Naive thymus-derived CD4-positive, alpha-beta T cell (primary cell): ENCODE measurements at regions of chr2 and their contacts with region 1.

Region 1: DNA sequence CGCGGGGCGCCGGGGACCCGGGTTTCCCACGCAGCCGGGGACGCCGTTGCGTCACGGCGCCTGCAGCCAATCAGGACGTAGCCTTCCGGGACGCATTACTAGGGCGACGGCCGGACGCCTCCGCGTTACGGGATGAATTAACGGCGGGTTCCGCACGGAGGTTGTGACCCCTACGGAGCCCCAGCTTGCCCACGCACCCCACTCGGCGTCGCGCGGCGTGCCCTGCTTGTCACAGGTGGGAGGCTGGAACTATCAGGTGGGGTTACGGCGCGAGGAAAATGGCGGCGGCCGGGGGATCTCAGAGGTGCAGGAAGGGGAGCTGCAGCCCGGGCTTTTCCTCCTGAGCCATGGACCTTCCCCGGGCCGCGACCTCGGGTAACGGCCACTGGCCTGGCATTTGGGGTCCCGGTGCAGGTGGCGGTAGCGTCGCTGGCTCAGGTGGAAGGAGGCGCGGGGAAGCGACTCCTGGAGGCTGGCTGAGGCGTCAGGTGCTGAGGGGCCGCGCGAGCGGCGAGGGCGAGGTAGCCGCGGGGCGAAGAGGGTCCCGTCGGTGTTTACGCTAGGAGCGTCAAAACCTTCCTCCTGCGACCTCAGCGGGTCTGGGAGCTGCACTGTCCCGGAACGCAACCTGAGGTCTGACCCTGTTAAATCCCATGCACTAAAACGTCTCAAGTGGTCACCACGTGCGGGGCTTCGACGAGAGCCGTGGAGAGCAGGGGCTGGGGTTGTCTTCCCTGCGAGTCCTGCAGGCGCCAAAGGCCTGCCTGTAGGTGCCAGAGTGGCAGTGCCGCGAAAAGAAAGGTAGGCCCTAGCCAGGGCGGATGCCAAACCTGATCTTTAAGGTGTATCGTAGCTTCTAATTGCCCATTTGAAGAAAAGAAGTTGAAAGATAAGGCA is at the start of gene LCLAT1:
- DNase-seq: peak; percentile 72 to 91 (median 86)
- ATAC-seq: peak; percentile 89
- H3K4me3 ChIP-seq: peak within 1 kb of the TSS; percentile 89
- H3K4me3 Mint-ChIP-seq: peak within 1 kb of the TSS; percentile 86 to 97 (median 95)
- H3K27ac ChIP-seq: peak within 1 kb of the TSS; percentile 91
- H3K27ac Mint-ChIP-seq: peak within 1 kb of the TSS; percentile 92 to 99 (median 97)
- H3K4me1 ChIP-seq: peaks cover 10 to 18% of the 10 kb centered on the region in 2 donors
- H3K4me1 Mint-ChIP-seq: peaks cover 23 to 56% (median 48%) of the 10 kb centered on the region in 7 donors
- H3K27me3 ChIP-seq: no peaks in the 10 kb centered on the region
- H3K27me3 Mint-ChIP-seq: no peaks in the 10 kb centered on the region
- total RNA-seq, gene LCLAT1: 18.2 to 25.2 (median 22.2) TPM

Region 2: DNA sequence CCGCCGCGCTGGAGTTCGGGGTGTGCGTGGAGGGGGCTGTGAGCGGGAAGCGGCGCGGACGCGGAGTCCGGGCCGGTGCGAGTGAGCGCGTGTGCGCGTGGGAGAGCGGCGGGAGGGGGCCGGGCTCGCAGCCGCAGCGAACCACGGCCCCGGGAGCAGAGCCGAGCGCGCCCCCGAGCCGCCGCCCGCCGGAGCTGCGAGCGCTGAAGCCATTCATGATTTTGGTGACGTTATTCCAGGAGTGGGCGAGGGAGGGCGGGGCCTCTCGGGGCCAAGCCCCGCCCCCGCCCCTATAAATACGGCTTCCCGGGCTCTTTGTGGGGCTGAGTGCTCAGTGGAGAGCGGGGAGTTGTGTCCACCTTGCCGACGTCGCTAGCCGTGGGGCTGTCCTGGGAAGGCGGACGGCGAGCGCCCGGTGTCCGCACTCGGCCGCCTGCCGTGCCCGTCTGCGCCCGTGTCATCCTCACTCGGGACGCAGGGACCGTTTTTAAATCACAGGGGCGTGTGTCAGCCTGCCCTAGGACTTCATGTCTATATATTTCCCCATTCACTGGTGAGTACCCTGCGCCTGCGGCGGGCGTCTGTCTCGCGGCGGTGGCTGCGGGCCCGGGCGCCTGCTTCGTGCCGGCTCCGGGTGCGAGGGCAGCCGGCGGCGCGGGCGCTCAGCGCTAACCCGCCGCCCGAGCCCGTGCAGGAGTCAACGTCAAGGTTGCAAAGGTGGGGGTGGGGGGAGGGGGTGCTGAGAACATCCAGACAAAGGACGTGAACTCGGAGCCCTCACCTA is 216.0 kb before region 1 on chr2 and contains the start of gene LBH:
- CTCF ChIA-PET with region 1: no interaction called
- POLR2A ChIA-PET with region 1: interaction called, 32 read pairs
- intact Hi-C with region 1: loop called (anchors 1 kb)
- DNase-seq: peak; percentile 74 to 92 (median 88)
- ATAC-seq: peak; percentile 72
- H3K4me3 ChIP-seq: peak within 1 kb of the TSS; percentile 75
- H3K4me3 Mint-ChIP-seq: peak within 1 kb of the TSS; percentile 87 to 98 (median 94)
- H3K27ac ChIP-seq: peak within 1 kb of the TSS; percentile 97
- H3K27ac Mint-ChIP-seq: peak within 1 kb of the TSS; percentile 87 to 100 (median 96)
- H3K4me1 ChIP-seq: peaks cover 49 to 55% of the 10 kb centered on the region in 2 donors
- H3K4me1 Mint-ChIP-seq: peaks cover 26 to 65% (median 57%) of the 10 kb centered on the region in 7 donors
- H3K27me3 ChIP-seq: no peaks in the 10 kb centered on the region
- H3K27me3 Mint-ChIP-seq: peaks cover 0 to 8% (median 0%) of the 10 kb centered on the region in 5 donors
- total RNA-seq, gene LBH: 146 to 517 (median 192) TPM

Region 3: DNA sequence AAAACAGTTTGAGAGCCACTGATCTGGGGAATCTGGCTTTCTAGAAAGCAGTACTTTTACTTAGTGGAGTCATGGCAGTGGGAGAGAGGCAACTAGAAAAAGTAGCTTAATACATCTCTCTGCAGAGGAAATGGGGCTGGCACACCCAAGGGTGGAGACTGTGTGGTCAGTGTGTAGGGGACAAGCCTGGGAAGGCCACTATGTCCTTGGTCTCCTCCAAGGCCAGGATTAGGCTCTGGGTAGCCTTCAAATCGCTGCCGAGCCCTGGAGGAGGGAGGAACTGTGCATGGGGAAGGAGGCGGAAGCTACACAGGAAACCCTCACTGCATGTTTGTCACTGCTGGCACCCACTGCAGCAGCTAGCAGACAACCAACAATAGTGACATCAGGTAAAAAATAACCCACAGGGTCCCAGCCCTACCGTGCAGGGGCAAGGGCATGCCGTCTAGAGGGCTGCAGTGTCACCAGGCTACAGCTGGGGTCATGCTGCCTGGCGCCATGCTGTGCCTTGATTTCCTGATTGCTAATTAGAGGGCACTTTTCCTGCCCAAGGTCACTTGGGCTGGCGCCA is 181.3 kb before region 1 on chr2:
- CTCF ChIA-PET with region 1: interaction called, 3 read pairs
- POLR2A ChIA-PET with region 1: no interaction called
- intact Hi-C with region 1: loop called (anchors 1 to 5 kb)
- DNase-seq: peak; percentile 25 to 80 (median 75)
- ATAC-seq: peak; percentile 95
- H3K4me3 ChIP-seq: peak overlapping the region; percentile 44
- H3K4me3 Mint-ChIP-seq: peak overlapping the region; percentile 68 to 92 (median 84)
- H3K27ac ChIP-seq: peak overlapping the region; percentile 82
- H3K27ac Mint-ChIP-seq: peak overlapping the region; percentile 89 to 100 (median 97)
- H3K4me1 ChIP-seq: peaks cover 46 to 65% of the 10 kb centered on the region in 2 donors
- H3K4me1 Mint-ChIP-seq: peaks cover 44 to 94% (median 86%) of the 10 kb centered on the region in 7 donors
- H3K27me3 ChIP-seq: no peaks in the 10 kb centered on the region
- H3K27me3 Mint-ChIP-seq: no peaks in the 10 kb centered on the region

Region 4: GRCh38 chr2:30421604-30422443 is 25.6 kb before region 1 on chr2:
- CTCF ChIA-PET with region 1: interaction called, 3 read pairs
- POLR2A ChIA-PET with region 1: interaction called, 9 read pairs
- intact Hi-C with region 1: loop called (anchors 1 kb)
- DNase-seq: peak in 5 of 9 donors; percentile 24 to 68 (median 44)
- ATAC-seq: peak; percentile 10
- H3K4me3 ChIP-seq: peak overlapping the region; percentile 32
- H3K4me3 Mint-ChIP-seq: peak overlapping the region; percentile 41 to 76 (median 70)
- H3K27ac ChIP-seq: peak overlapping the region; percentile 70
- H3K27ac Mint-ChIP-seq: peak overlapping the region; percentile 91 to 98 (median 93)
- H3K4me1 ChIP-seq: peaks cover 24 to 48% of the 10 kb centered on the region in 2 donors
- H3K4me1 Mint-ChIP-seq: peaks cover 35 to 64% (median 54%) of the 10 kb centered on the region in 7 donors
- H3K27me3 ChIP-seq: no peaks in the 10 kb centered on the region
- H3K27me3 Mint-ChIP-seq: no peaks in the 10 kb centered on the region

Region 5: GRCh38 chr2:30472326-30472725 is 24.9 kb after region 1 on chr2:
- CTCF ChIA-PET with region 1: interaction called, 5 read pairs
- POLR2A ChIA-PET with region 1: interaction called, 5 read pairs
- intact Hi-C with region 1: loop called in 1 of 2 experiments (anchors 2 kb)
- DNase-seq: peak in 1 of 9 donors; percentile 14
- ATAC-seq: no peak
- H3K4me3 ChIP-seq: no peak overlapping the region
- H3K4me3 Mint-ChIP-seq: no peak overlapping the region
- H3K27ac ChIP-seq: no peak overlapping the region
- H3K27ac Mint-ChIP-seq: peak overlapping the region in 2 of 9 donors; percentile 0 to 25
- H3K4me1 ChIP-seq: peaks cover 0 to 20% of the 10 kb centered on the region in 2 donors
- H3K4me1 Mint-ChIP-seq: peaks cover 14 to 78% (median 40%) of the 10 kb centered on the region in 7 donors
- H3K27me3 ChIP-seq: no peaks in the 10 kb centered on the region
- H3K27me3 Mint-ChIP-seq: no peaks in the 10 kb centered on the region